IMR-90 (cell line): ENCODE measurements at regions of chr2 and their contacts with region 1.

Region 1: DNA sequence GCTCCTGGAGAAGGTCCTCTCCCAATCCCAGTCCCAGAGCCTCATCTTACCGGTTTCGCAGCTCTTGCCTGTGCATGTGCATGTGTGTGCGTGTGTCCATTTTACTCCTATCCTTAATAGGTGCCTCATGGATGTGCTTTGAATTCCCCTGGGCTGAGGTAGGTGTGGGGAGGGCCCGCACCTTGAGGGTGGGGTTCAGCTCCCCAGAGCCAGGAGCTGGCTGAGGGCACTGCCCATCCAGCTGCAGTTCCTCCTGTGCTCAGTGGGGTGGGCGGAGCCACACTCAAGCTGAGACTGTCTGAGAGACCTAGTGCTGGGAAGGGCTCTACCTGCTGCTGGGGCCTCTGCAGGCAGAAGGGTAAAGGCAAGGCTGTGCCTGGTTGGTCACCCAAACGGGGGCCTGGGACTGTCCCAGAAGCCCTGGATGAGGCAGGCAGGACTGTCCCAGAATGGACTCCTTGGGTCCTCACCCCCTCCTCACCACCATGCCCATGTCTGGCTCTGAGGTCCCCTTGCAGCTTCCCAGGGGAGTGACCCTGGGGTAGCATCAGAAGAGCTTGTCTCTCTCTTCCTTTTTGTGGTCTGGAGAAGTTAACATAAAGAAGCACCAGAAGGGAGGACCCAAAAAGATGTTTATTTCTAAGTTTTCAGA is 8.9 kb downstream of the GDF7 start:
- DNase-seq: no peak
- ATAC-seq: peak; percentile 49
- H3K4me3 ChIP-seq: no peak overlapping the region
- H3K27ac ChIP-seq: no peak overlapping the region
- H3K4me1 ChIP-seq: peaks cover 7% of the 10 kb centered on the region; the same call in 1 of the 2 replicates
- H3K27me3 ChIP-seq: peaks cover 21% of the 10 kb centered on the region
- CTCF ChIP-seq: no peak
- POLR2A ChIP-seq: no peak
- RAD21 ChIP-seq: no peak

Region 2: DNA sequence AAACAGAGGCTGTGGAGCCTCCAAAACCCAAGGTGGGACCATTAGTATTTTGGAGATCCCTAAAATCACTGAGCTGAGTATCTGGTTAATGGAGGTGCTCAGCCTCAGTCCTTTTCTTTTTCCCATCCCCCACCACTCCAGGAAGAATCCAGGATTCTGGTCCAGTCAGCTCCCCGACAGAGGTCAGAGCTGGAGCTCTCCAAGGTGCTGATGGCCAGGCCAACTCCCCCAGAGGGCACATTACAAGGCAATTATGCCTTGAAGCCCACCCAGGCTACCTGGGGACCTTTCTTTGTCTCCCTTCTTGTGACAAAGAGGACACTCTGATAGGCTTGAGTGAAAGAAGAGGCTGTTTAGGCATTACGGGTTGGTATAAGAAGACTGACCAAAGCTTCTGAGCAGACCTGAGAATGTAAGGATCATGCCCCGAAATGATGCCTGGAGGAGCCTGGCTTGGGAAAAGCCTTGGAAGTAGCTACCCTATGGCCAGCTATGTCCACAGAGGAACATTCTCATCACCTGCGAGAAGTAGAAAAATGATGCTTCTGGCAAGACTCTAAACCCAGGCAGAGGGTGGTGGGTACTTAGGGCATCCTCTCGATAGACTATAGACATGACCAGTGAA is 249.6 kb after region 1 on chr2:
- CTCF ChIA-PET with region 1: no interaction called
- POLR2A ChIA-PET with region 1: no interaction called
- dilution Hi-C with region 1: loop called (anchors 25 kb)
- in situ Hi-C with region 1: no loop called
- intact Hi-C with region 1: no loop called
- DNase-seq: no peak
- ATAC-seq: peak; percentile 42; the same call in 1 of the 2 replicates
- H3K4me3 ChIP-seq: no peak overlapping the region
- H3K27ac ChIP-seq: no peak overlapping the region
- H3K4me1 ChIP-seq: no peaks in the 10 kb centered on the region
- H3K27me3 ChIP-seq: no peaks in the 10 kb centered on the region
- CTCF ChIP-seq: no peak
- POLR2A ChIP-seq: no peak
- RAD21 ChIP-seq: no peak